ENCODE measurements at regions of chr10 and their contacts with region 1.

Region 1: GRCh38 chr10:33008499-33009243 is 50.6 kb upstream of the ITGB1 start:
- DNase-seq: peak; percentile 26
- ATAC-seq: peak; percentile 74
- H3K4me3 ChIP-seq: peak overlapping the region; percentile 69
- H3K27ac ChIP-seq: no peak overlapping the region
- H3K4me1 ChIP-seq: 0 out of 2 replicates have a peak, but pooled peaks cover 3% of the 10 kb centered on the region
- H3K27me3 ChIP-seq: peaks cover 0 to 2% of the 10 kb centered on the region in 2 experiments; a peak in 1 of 4 replicates
- CTCF ChIP-seq: peak; percentile 95 to 98 (median 97)
- EP300 ChIP-seq: no peak
- POLR2A ChIP-seq: no peak
- RAD21 ChIP-seq: peak; percentile 99

Region 2: DNA sequence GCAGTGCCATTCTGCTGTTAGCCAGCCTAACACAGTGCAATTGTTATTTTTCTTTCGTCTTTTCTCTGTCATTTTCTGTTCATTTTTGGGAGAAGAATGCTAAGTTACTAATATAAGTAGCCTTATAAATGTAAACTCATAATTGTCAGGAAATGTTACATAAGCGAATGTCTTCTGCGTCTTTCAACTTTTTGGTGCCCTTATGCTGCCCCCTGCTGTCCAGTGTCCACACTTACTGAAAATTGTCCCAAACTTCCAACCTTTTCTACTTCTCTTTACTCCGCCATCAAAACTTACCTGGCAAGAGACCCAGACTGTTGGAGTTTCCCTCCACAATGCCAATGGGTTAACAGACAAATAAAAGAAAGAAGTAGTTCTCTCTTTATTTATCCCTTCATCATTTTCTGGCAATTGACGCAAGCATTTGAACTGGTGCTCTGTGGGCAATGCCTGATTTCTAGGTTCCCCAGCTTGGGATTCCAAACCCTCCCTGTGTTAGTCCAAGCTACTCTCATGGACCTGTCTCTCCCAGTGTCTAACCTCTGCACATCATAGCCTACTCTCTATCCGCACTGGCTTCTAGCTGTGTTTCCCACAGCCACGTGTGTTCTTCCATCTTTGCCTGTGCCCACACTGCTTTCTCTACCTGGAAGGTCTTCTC is 640.7 kb before region 1 on chr10:
- CTCF ChIA-PET with region 1: interaction called, 10 read pairs
- POLR2A ChIA-PET with region 1: no interaction called
- RAD21 ChIA-PET with region 1: interaction called, 4 read pairs
- SMC1A ChIA-PET with region 1: no interaction called
- in situ Hi-C with region 1: no loop called
- intact Hi-C with region 1: loop called (anchors 5 kb)
- DNase-seq: no peak
- ATAC-seq: peak; percentile 65
- H3K4me3 ChIP-seq: no peak overlapping the region
- H3K27ac ChIP-seq: no peak overlapping the region
- H3K4me1 ChIP-seq: no peaks in the 10 kb centered on the region
- H3K27me3 ChIP-seq: no peaks in the 10 kb centered on the region
- CTCF ChIP-seq: peak; percentile 61 to 80 (median 69)
- EP300 ChIP-seq: no peak
- POLR2A ChIP-seq: no peak
- RAD21 ChIP-seq: peak; percentile 75

Region 3: DNA sequence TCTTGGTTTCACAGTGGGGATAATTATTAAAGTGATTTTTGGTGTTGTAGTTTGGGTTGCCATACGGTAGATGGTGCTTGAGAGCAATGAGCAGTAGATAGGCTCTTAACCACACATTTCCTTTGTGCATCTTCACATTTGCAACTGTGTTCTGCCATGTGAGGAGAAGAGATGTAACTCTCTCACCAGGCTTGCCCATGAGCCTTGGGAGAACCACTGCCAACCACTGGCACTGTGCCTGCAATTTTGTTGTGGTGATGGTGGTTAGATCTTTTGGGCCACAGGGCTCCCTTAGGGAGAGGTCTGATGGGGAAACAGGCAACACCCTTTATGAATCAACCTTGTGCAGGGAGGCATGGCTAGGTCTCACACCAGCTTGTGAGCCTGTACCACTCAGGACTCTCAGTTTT is 358.4 kb before region 1 on chr10:
- CTCF ChIA-PET with region 1: interaction called, 3 read pairs
- POLR2A ChIA-PET with region 1: no interaction called
- RAD21 ChIA-PET with region 1: no interaction called
- SMC1A ChIA-PET with region 1: no interaction called
- in situ Hi-C with region 1: no loop called
- intact Hi-C with region 1: loop called (anchors 2 kb)
- DNase-seq: peak; percentile 30
- ATAC-seq: peak; percentile 70
- H3K4me3 ChIP-seq: no peak overlapping the region
- H3K27ac ChIP-seq: no peak overlapping the region
- H3K4me1 ChIP-seq: no peaks in the 10 kb centered on the region; the same call in 1 of the 2 replicates
- H3K27me3 ChIP-seq: no peaks in the 10 kb centered on the region
- CTCF ChIP-seq: peak in 1 of 3 experiments; percentile 27; a peak in 1 of 6 replicates
- EP300 ChIP-seq: no peak
- POLR2A ChIP-seq: no peak
- RAD21 ChIP-seq: 0 out of 2 replicates have a peak, but pooled peaks have one; percentile 8

Region 4: DNA sequence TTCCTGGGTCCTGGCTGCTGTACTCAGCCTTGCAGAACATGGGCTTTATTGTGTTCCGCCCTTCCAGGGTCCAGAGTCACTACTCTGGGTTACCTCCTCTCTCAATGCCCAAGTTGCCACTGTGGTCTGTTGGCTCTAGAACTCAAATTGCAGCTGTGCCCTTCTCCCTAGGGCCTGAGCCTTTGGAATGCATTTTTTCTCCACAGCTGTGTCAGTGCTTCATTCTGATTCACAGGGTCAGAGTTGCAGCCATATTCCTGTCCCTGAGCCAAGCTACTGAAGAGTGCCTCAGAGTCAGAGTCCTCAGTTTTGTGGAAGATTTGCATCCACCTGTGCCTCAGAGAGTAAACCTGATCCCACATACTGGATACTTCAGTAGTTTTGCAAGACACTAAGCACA is 218.2 kb before region 1 on chr10:
- CTCF ChIA-PET with region 1: interaction called, 25 read pairs
- POLR2A ChIA-PET with region 1: no interaction called
- RAD21 ChIA-PET with region 1: interaction called, 5 read pairs
- SMC1A ChIA-PET with region 1: interaction called, 9 read pairs
- in situ Hi-C with region 1: loop called (anchors 5 kb)
- intact Hi-C with region 1: loop called (anchors 1 kb)
- DNase-seq: no peak
- ATAC-seq: no peak
- H3K4me3 ChIP-seq: no peak overlapping the region
- H3K27ac ChIP-seq: no peak overlapping the region
- H3K4me1 ChIP-seq: no peaks in the 10 kb centered on the region
- H3K27me3 ChIP-seq: no peaks in the 10 kb centered on the region
- CTCF ChIP-seq: no peak
- EP300 ChIP-seq: no peak
- POLR2A ChIP-seq: no peak
- RAD21 ChIP-seq: no peak

Region 5: DNA sequence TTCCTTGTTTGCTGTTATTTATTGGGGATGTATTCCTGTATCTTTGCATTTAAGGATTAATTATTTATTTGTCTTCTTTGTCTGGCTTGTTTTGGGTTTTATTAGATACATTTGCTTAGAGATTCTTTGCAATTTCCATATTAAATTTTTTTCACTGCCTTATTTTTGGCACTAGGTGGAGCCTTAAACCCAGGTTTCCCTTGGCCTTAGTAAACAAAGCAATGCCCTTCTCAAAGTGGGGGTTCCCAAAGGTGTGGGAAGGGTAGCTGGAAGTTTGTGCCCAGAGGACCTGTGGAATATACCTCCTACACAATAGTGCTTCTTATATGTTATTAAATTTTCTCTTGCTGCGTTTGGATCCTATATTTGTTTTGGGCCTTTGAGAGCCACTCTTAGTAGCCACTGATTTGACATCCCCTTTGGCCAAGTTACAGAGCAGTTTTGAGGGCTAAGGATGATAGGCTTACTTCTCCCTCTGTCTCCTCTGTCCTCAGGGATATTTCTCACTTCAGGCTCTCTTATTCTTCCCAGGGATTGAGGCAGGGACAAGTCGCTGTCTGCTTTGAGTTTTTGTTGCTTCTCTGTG is 213.0 kb before region 1 on chr10:
- CTCF ChIA-PET with region 1: interaction called, 25 read pairs
- POLR2A ChIA-PET with region 1: no interaction called
- RAD21 ChIA-PET with region 1: interaction called, 5 read pairs
- SMC1A ChIA-PET with region 1: interaction called, 9 read pairs
- in situ Hi-C with region 1: loop called (anchors 5 kb)
- intact Hi-C with region 1: loop called (anchors 1 kb)
- DNase-seq: peak; percentile 4
- ATAC-seq: peak; percentile 55; the same call in 1 of the 3 replicates
- H3K4me3 ChIP-seq: no peak overlapping the region
- H3K27ac ChIP-seq: no peak overlapping the region
- H3K4me1 ChIP-seq: no peaks in the 10 kb centered on the region
- H3K27me3 ChIP-seq: no peaks in the 10 kb centered on the region
- CTCF ChIP-seq: peak; percentile 50 to 78 (median 55); a peak in 4 of 6 replicates
- EP300 ChIP-seq: no peak
- POLR2A ChIP-seq: no peak
- RAD21 ChIP-seq: peak; percentile 98

Region 6: GRCh38 chr10:32923849-32924248 is 84.8 kb before region 1 on chr10:
- CTCF ChIA-PET with region 1: no interaction called
- POLR2A ChIA-PET with region 1: no interaction called
- RAD21 ChIA-PET with region 1: no interaction called
- SMC1A ChIA-PET with region 1: no interaction called
- in situ Hi-C with region 1: no loop called
- intact Hi-C with region 1: no loop called
- DNase-seq: no peak
- ATAC-seq: no peak
- H3K4me3 ChIP-seq: no peak overlapping the region
- H3K27ac ChIP-seq: no peak overlapping the region
- H3K4me1 ChIP-seq: no peaks in the 10 kb centered on the region
- H3K27me3 ChIP-seq: no peaks in the 10 kb centered on the region
- CTCF ChIP-seq: no peak
- EP300 ChIP-seq: no peak
- POLR2A ChIP-seq: no peak
- RAD21 ChIP-seq: no peak